ENCODE measurements at regions of chr1 and their contacts with region 1.

Region 1: DNA sequence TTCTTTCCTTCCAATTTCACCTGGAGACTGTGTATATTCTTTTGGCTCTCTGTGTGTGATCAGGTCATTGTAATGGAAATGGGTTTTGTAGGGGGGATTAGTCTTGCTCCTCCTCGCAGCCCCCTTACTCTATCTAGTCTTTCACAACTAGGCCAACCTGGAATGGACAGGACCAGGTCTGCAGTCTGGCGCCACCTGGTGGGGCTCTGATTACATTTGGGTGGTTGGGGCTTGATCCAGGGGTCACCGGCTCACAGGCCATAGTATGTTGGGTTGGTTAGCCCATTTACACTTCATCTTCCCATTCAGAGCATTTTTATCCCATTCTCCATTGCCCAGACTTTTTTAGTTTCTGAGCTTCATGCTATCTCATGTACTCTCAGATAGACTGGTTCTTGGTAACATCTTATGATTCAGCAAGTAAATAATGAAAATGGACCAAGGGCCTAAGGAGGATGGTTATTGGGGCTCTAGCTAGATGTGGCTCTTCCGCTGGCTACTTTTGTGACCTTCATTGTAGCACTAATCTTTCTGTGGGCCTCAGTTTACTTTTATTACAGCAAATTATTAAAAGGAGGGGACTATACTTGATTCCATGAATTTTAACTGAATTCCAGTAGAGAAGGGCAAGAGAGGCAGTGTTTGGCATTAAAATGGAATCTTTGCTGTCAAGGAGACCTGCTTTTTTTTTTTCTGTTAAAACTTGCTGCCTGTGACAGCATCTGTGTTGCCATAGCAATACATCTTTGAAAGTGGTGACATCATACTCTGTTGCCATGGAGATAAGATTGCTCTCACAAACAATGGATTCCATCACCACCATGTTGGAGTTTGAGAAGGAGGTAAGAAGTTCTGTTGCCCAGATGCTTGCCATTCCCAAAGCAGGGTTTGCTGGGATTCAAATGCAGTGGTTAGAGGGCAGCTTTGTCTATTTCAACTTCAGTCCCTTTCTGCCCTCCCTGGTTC is 150.1 kb downstream of the PLXNA2 start:
- DNase-seq: peak; percentile 78
- ATAC-seq: peak; percentile 46 to 68

Region 2: DNA sequence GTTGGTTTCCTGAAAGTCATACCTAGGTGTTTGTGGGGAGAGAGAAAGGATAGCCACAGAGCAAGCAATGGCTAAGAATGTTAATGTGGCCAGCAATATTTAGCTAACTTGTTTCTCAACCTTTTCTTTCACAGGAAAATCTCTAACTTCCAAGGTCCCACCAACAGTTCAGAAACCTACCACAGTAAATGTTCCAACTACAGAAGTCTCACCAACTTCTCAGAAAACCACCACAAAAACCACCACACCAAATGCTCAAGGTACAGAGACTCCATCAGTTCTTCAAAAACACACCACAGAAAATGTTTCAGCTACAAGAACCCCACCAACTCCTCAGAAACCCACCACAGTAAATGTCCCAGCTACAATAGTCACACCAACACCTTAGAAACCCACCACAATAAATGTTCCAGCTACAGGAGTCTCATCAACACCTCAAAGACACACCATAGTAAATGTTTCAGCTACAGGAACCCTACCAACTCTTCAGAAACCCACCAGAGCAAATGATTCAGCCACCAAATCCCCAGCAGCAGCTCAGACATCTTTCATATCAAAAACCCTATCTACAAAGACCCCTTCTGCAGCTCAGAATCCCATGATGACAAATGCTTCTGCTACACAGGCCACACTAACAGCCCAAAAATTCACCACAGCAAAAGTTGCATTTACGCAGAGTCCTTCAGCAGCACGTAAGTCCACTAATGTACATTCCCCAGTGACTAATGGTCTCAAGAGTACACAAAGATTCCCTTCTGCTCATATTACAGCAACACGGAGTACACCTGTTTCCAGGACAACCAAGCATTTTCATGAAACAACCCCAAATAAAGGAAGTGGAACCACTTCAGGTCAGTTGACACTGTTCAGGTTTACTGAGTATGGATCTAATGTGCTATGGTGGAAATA is 757.2 kb before region 1 on chr1:
- intact Hi-C with region 1: no loop called
- DNase-seq: no peak
- ATAC-seq: peak in 1 of 2 donors; percentile 7

Region 3: DNA sequence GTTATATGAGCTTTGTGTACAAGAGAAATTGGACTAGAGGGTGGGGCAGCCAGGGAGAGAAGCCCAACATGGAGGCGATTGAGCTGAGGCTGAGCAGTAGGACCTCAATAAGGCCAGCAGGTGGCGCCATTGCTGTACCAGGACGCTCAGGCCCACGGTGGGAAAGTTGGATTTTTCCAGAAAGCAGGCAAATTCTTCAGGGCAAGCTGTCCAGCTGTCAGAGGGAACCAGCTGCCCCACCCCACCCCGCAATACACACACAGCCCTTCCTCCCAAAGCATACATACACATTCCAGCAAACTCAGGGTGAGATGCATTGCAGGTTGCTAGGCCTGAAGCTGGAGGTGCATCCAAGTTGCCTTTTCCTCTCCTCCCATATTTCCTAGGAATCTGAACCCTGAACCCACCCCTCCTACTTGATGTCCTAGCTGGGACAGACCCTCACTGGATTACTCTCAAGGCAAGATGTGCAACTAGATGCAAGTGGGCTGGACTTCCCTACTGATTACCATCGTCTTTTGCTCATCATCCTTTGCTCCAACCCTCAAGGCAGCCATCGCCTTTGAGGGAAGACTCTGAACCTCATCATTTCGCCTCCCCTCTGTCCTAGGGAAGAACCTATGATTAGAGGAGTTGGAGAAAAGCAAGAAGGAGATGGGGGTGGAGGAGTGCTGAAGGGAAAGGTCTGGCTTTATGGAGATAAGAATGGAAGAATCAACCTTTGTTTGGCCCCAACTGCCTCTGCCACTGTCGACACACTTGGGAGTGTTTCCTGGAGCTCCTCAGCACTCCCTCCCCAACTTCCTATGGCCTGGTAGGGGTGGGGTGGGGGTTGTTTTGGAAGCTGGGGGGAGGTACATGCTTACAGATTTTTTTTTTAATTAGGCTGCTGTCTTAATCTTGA is 208.7 kb before region 1 on chr1:
- intact Hi-C with region 1: loop called in 1 of 2 experiments (anchors 10 kb)
- DNase-seq: peak; percentile 91
- ATAC-seq: peak; percentile 89 to 91

Region 4: GRCh38 chr1:207910591-207911354 is 183.3 kb before region 1 on chr1 and contains the start of gene CD34:
- intact Hi-C with region 1: no loop called
- DNase-seq: peak; percentile 72
- ATAC-seq: peak; percentile 64 to 83
- total RNA-seq, gene CD34: 101 to 115 TPM

Region 5: GRCh38 chr1:208024406-208024805 is 69.6 kb before region 1 on chr1:
- intact Hi-C with region 1: loop called in 1 of 2 experiments (anchors 5 kb)
- DNase-seq: no peak
- ATAC-seq: no peak

Region 6: DNA sequence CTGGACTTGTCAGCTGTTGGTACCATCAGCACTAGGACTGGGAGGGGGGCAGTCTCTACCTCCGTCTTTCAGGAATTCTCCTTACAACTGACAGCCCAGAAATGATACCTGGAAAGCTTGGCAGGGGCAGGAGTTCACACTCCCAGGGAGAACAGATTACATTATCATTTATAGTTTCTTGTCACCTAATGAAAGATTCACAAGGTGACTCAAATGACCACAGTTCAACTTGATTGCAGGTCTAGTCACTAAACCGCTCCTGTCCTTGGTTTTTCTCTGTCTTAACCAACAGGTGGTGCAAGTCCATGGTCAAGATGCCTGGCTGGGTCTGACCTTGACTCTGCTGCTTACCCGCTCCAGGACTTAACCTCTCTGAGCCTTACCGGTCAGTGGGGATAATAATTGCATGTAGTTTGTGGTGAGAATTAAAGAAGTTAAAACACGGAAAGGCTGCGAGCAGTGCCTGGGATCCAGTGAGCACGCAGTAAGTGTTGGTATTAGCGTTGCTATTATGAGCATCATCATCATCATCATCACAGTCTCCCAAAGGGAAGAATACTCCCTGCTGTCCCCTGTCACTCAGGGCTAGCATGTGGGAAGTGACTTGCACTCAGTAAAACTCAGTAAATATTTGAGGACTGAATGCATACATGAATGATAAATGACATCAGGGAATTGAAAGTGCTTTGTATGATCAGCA is 57.8 kb before region 1 on chr1:
- intact Hi-C with region 1: loop called in 1 of 2 experiments (anchors 10 kb)
- DNase-seq: no peak
- ATAC-seq: no peak

Region 7: DNA sequence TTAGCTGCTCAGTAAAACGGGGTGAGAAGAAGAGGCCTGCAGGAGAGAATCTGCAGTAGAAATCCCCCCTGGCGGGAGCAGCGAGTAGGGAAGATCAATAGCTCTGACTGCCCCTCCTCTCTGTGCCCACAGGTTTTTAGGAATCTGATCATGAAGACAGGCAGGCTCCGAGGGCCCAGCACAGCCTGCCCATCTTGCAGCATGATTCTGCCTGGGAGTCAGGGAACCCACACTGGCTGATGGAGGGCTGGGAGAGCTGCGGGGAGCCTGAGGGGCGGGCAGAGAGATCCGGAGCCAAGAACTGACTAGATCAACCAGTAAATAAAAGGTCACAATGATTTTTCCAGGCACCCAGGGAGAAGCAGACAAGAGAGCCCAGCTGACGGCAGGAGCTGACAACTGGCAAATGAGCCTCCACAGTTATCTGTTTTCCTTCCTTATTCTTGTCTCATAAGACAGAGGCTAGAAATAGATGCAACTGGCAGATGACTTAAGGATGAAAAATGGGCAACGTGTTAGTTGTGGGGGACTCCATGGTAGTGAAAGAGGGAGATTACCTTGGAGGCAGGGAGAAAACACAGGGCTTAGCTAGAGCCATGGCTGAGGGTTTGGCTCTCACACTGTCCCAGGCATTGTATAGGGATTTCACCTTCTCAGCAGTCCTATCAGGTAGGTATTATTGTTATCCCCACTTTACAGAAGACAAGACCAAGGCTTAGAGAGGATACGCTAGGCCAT is 33.9 kb after region 1 on chr1:
- intact Hi-C with region 1: no loop called
- DNase-seq: no peak
- ATAC-seq: no peak